Dorsolateral prefrontal cortex (tissue), 120 donors: ENCODE measurements at regions of chr12 and their contacts with region 1.

Region 1: GRCh38 chr12:122399592-122400373 is 22.7 kb downstream of the CLIP1 start:
- DNase-seq: peak in 9 of 10 donors; percentile 40 to 68 (median 57)
- H3K4me3 ChIP-seq: peak overlapping the region in 29 of 59 donors; percentile 1 to 38 (median 14)
- H3K27ac ChIP-seq: peak overlapping the region in 58 of 59 donors; percentile 41 to 97 (median 84)
- H3K27me3 ChIP-seq: no peaks in the 10 kb centered on the region
- CTCF ChIP-seq: peak; percentile 25 to 87 (median 71)

Region 2: DNA sequence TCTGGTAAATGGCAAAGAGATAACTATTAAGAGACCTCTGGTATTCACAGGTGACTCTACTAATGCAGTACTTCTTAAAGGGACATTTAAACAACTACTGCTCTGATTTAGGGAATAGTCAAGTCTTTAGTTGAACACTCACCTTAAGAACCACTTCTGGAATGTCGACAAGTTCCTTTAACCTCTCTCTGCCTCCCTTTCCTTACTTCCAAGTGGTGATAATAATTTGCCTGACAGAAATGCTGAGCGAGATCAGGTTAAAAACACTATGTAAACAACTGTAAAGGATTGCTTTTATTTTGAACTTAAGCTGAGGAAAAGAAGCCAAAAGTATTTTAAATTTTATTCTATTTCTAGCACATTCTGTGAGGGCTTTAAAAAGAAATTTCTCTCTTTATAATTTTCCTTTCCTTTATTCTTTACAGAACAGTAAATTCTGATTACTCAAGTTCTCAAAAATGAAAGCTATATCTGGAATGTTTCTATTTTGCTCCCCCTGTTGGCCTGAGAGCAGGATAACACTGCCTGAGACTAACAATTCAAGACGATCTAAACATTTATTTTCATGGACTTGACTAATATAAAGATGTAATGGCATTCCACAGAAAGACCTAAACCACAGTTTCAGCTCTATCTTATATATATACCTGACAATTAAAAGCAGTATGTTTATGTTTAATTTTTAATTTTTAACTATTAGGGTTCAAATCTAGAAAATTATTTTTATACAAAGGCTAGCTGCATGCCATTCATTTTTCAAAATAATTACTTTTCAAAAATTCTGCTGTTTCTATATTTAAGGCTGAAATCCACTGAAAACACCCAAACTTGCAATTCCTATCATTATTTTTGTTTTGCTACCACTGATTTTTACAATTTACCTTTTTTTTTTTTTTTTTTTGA is 71.8 kb after region 1 on chr12:
- intact Hi-C with region 1: loop called (anchors 2 to 5 kb)
- DNase-seq: peak in 1 of 10 donors; percentile 16
- H3K4me3 ChIP-seq: peak overlapping the region in 8 of 59 donors; percentile 2 to 26 (median 9)
- H3K27ac ChIP-seq: peak overlapping the region in 41 of 59 donors; percentile 3 to 82 (median 50)
- H3K27me3 ChIP-seq: no peaks in the 10 kb centered on the region
- CTCF ChIP-seq: peak; percentile 56 to 89 (median 80)